Heart right ventricle (tissue), 16 donors: ENCODE measurements at regions of chr14 and their contacts with region 1.

Region 1: DNA sequence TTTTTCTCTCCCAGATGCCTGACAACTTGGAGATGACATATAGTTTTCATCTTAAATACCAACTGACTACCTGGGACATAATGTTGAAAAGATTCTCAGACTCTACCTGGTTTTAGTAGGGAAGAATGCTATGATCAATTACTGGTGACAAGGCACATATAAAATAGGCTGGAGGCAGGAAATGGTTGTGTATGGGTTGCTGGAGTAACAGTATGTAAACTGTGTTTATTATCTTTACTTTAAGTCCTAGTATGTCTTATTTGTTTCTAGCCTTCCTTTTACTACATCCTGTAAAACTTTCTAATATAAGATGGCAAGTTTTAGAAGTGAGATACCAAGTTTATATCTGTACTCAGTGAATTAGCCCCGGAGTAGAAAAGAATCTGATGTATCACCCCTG is 98.1 kb downstream of the NUBPL start:
- DNase-seq: no peak
- ATAC-seq: no peak
- H3K4me3 ChIP-seq: no peak overlapping the region
- H3K27ac ChIP-seq: no peak overlapping the region
- H3K4me1 ChIP-seq: no peaks in the 10 kb centered on the region
- H3K27me3 ChIP-seq: no peaks in the 10 kb centered on the region
- CTCF ChIP-seq: no peak

Region 2: GRCh38 chr14:30656190-30656632 is 1003.1 kb before region 1 on chr14:
- intact Hi-C with region 1: no loop called
- DNase-seq: peak in 1 of 2 donors; percentile 12
- ATAC-seq: peak in 3 of 8 donors; percentile 48 to 66 (median 52)
- H3K4me3 ChIP-seq: no peak overlapping the region
- H3K27ac ChIP-seq: no peak overlapping the region
- H3K4me1 ChIP-seq: no peaks in the 10 kb centered on the region
- H3K27me3 ChIP-seq: no peaks in the 10 kb centered on the region
- CTCF ChIP-seq: peak; percentile 41 to 77 (median 71)

Region 3: DNA sequence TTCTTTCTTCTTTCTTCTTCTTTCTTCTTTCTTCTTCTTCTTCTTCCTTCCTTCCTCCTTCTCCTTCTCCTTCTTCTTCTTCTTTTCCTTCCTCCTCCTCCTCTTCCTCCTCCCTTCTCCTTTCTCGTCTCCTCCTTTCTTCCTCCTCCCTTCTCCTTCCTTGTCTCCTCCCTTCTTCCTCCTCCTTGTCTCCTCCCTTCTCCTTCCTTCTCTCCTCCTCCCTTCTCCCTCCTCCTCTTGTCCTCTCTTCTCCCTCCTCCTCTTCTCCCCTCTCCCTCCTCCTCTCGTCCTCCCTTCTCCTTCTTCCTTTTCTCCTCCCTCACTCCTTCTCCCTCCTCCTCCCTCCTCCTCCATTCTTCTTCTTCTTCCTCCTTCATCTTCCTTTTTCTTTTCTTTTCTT is 53.6 kb before region 1 on chr14:
- intact Hi-C with region 1: loop called in 1 of 10 experiments (anchors 10 kb)
- DNase-seq: no peak
- ATAC-seq: no peak
- H3K4me3 ChIP-seq: no peak overlapping the region
- H3K27ac ChIP-seq: no peak overlapping the region
- H3K4me1 ChIP-seq: no peaks in the 10 kb centered on the region
- H3K27me3 ChIP-seq: no peaks in the 10 kb centered on the region
- CTCF ChIP-seq: no peak

Region 4: GRCh38 chr14:32038876-32039275 is 379.6 kb after region 1 on chr14:
- intact Hi-C with region 1: no loop called
- DNase-seq: no peak
- ATAC-seq: no peak
- H3K4me3 ChIP-seq: no peak overlapping the region
- H3K27ac ChIP-seq: no peak overlapping the region
- H3K4me1 ChIP-seq: peaks cover 0 to 9% (median 3%) of the 10 kb centered on the region in 9 donors
- H3K27me3 ChIP-seq: no peaks in the 10 kb centered on the region
- CTCF ChIP-seq: no peak

Region 5: GRCh38 chr14:32364941-32365340 is 705.7 kb after region 1 on chr14:
- intact Hi-C with region 1: no loop called
- DNase-seq: no peak
- ATAC-seq: no peak
- H3K4me3 ChIP-seq: no peak overlapping the region
- H3K27ac ChIP-seq: no peak overlapping the region
- H3K4me1 ChIP-seq: peaks cover 2 to 26% (median 12%) of the 10 kb centered on the region in 9 donors
- H3K27me3 ChIP-seq: no peaks in the 10 kb centered on the region
- CTCF ChIP-seq: no peak